ENCODE measurements at regions of chr11 and their contacts with region 1.

Region 1: GRCh38 chr11:128290106-128290840 is 297.1 kb downstream of the ETS1 start:
- DNase-seq: peak; percentile 84 to 89 (median 86)
- H3K4me3 ChIP-seq: peak overlapping the region; percentile 68
- H3K4me3 Mint-ChIP-seq: peak overlapping the region; percentile 87 to 95 (median 94)
- H3K27ac ChIP-seq: peak overlapping the region; percentile 90
- H3K27ac Mint-ChIP-seq: peak overlapping the region; percentile 98 to 100 (median 99)
- H3K4me1 ChIP-seq: peaks cover 89% of the 10 kb centered on the region
- H3K4me1 Mint-ChIP-seq: peaks cover 70 to 100% (median 84%) of the 10 kb centered on the region in 4 donors
- H3K27me3 ChIP-seq: no peaks in the 10 kb centered on the region
- H3K27me3 Mint-ChIP-seq: no peaks in the 10 kb centered on the region

Region 2: DNA sequence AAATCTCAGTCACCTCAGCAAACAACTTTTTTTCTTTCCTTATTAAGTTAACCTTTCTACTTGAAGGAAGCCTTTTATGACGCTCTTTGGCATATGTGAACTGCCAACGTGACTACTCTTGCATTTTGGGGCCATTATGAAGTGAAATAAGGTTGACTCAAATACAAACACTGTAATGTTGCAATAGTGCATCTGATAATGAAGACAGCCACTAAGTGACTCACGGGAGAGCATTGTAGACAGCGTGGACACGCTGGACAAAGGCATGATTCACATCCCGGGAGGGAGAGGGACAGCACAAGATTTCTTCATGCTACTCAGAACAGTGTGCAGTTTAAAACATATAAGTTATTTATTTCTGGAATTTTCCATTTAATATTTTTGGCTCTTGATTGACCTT is 263.7 kb before region 1 on chr11:
- CTCF ChIA-PET with region 1: interaction called, 5 read pairs
- POLR2A ChIA-PET with region 1: no interaction called
- intact Hi-C with region 1: loop called (anchors 1 kb)
- DNase-seq: no peak
- H3K4me3 ChIP-seq: no peak overlapping the region
- H3K4me3 Mint-ChIP-seq: no peak overlapping the region
- H3K27ac ChIP-seq: no peak overlapping the region
- H3K27ac Mint-ChIP-seq: no peak overlapping the region
- H3K4me1 ChIP-seq: no peaks in the 10 kb centered on the region
- H3K4me1 Mint-ChIP-seq: peaks cover 0 to 4% (median 1%) of the 10 kb centered on the region in 4 donors
- H3K27me3 ChIP-seq: no peaks in the 10 kb centered on the region
- H3K27me3 Mint-ChIP-seq: peaks cover 3 to 4% of the 10 kb centered on the region in 2 donors

Region 3: GRCh38 chr11:128222245-128222884 is 67.9 kb before region 1 on chr11:
- CTCF ChIA-PET with region 1: no interaction called
- POLR2A ChIA-PET with region 1: no interaction called
- intact Hi-C with region 1: no loop called
- DNase-seq: no peak
- H3K4me3 ChIP-seq: no peak overlapping the region
- H3K4me3 Mint-ChIP-seq: no peak overlapping the region
- H3K27ac ChIP-seq: no peak overlapping the region
- H3K27ac Mint-ChIP-seq: no peak overlapping the region
- H3K4me1 ChIP-seq: no peaks in the 10 kb centered on the region
- H3K4me1 Mint-ChIP-seq: peaks cover 4 to 8% (median 6%) of the 10 kb centered on the region in 4 donors
- H3K27me3 ChIP-seq: no peaks in the 10 kb centered on the region
- H3K27me3 Mint-ChIP-seq: peaks cover 2% of the 10 kb centered on the region in 2 donors

Region 4: DNA sequence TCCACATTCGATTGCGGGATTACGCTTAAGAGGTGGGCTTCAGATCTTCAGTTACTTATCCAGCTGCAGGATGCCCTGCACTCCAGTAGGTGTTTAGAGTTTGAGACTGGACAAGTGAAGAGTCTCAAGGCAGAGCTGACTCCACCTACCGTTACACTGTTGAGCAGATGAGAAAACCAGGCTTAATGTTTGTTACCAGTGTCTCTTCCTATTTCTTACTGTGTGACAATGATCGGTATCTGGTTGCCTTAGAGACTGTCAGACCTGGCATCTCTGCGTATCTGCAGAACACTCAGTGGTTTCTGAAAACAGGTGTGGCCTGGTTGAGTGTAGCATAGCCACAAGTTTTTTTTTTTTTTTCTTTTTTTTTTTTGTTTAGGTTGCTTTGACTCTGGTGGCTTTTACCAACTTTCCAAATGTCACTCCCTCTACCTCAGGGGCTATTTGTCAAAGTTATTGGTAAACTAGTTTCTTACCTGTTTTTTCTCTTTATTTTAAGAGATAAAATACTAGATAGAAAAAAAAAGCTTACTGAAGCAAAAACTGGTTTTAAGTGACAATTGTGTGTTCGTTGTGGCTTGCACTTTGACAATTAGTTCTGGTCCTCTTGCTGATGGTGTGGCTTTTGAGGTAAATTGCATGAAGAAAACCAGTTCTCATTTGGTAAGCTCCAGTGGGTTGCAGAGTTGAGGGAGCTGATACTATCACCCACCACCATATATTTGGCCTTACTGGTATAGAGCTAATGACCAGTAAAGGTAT is 12.3 kb after region 1 on chr11:
- CTCF ChIA-PET with region 1: interaction called, 73 read pairs
- POLR2A ChIA-PET with region 1: interaction called, 223 read pairs
- intact Hi-C with region 1: loop called (anchors 1 kb)
- DNase-seq: peak; percentile 88 to 96 (median 94)
- H3K4me3 ChIP-seq: peak overlapping the region; percentile 54 to 77
- H3K4me3 Mint-ChIP-seq: peak overlapping the region; percentile 90 to 95 (median 92)
- H3K27ac ChIP-seq: peak overlapping the region; percentile 93
- H3K27ac Mint-ChIP-seq: peak overlapping the region; percentile 95 to 100 (median 98)
- H3K4me1 ChIP-seq: peaks cover 98% of the 10 kb centered on the region
- H3K4me1 Mint-ChIP-seq: peaks cover 72 to 97% (median 86%) of the 10 kb centered on the region in 4 donors
- H3K27me3 ChIP-seq: no peaks in the 10 kb centered on the region
- H3K27me3 Mint-ChIP-seq: no peaks in the 10 kb centered on the region

Region 5: GRCh38 chr11:128365044-128365443 is 74.8 kb after region 1 on chr11:
- CTCF ChIA-PET with region 1: no interaction called
- POLR2A ChIA-PET with region 1: interaction called, 6 read pairs
- intact Hi-C with region 1: loop called (anchors 5 kb)
- DNase-seq: peak in 1 of 5 donors; percentile 35
- H3K4me3 ChIP-seq: no peak overlapping the region
- H3K4me3 Mint-ChIP-seq: no peak overlapping the region
- H3K27ac ChIP-seq: no peak overlapping the region
- H3K27ac Mint-ChIP-seq: peak overlapping the region in 1 of 7 donors; percentile 12
- H3K4me1 ChIP-seq: peaks cover 19% of the 10 kb centered on the region
- H3K4me1 Mint-ChIP-seq: peaks cover 21 to 45% (median 29%) of the 10 kb centered on the region in 4 donors
- H3K27me3 ChIP-seq: no peaks in the 10 kb centered on the region
- H3K27me3 Mint-ChIP-seq: no peaks in the 10 kb centered on the region

Region 6: GRCh38 chr11:128472128-128473089 is 182.1 kb after region 1 on chr11:
- CTCF ChIA-PET with region 1: interaction called, 8 read pairs
- POLR2A ChIA-PET with region 1: interaction called, 651 read pairs
- intact Hi-C with region 1: loop called (anchors 1 kb)
- DNase-seq: peak in 4 of 5 donors; percentile 51 to 82 (median 57)
- H3K4me3 ChIP-seq: peak overlapping the region; percentile 5 to 27
- H3K4me3 Mint-ChIP-seq: peak overlapping the region; percentile 70 to 93 (median 84)
- H3K27ac ChIP-seq: peak overlapping the region; percentile 94
- H3K27ac Mint-ChIP-seq: peak overlapping the region; percentile 98 to 99 (median 99)
- H3K4me1 ChIP-seq: peaks cover 100% of the 10 kb centered on the region
- H3K4me1 Mint-ChIP-seq: peaks cover 85 to 98% (median 92%) of the 10 kb centered on the region in 4 donors
- H3K27me3 ChIP-seq: no peaks in the 10 kb centered on the region
- H3K27me3 Mint-ChIP-seq: no peaks in the 10 kb centered on the region

Region 7: DNA sequence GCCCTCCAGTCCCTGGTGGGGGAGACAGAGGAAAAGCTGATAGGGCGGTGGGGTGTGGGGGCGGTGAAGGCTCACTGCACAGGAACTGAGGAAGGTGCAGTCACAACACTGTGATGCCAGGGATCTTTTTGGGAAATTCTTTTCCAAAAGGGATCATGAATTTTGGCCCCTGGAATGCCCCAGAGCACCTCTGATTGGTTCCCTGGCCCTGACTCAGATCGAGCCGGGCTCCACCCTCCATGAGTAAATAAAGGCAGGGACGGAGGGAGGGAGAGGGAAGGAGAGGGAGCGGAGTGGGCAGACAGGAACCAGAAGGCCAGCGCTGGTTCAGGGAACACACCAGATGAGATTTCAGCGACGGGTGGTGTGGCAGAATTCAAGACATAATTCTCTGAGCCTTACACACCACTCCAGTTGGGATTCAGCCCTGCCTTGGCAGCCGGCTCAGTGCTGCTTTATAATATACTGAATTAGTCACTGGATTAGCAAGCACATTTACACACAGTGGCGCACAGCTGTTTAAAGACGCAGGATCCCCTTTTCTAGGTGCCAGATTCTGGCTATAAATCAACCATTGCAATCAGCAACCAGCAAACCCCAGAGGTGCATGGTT is 216.8 kb after region 1 on chr11:
- CTCF ChIA-PET with region 1: interaction called, 17 read pairs
- POLR2A ChIA-PET with region 1: interaction called, 888 read pairs
- intact Hi-C with region 1: loop called (anchors 2 kb)
- DNase-seq: peak in 1 of 5 donors; percentile 77
- H3K4me3 ChIP-seq: peak overlapping the region; percentile 37 to 39
- H3K4me3 Mint-ChIP-seq: peak overlapping the region; percentile 81 to 100 (median 94)
- H3K27ac ChIP-seq: peak overlapping the region; percentile 89
- H3K27ac Mint-ChIP-seq: peak overlapping the region; percentile 92 to 99 (median 98)
- H3K4me1 ChIP-seq: peaks cover 100% of the 10 kb centered on the region
- H3K4me1 Mint-ChIP-seq: peaks cover 80 to 100% (median 89%) of the 10 kb centered on the region in 4 donors
- H3K27me3 ChIP-seq: no peaks in the 10 kb centered on the region
- H3K27me3 Mint-ChIP-seq: no peaks in the 10 kb centered on the region

Region 8: DNA sequence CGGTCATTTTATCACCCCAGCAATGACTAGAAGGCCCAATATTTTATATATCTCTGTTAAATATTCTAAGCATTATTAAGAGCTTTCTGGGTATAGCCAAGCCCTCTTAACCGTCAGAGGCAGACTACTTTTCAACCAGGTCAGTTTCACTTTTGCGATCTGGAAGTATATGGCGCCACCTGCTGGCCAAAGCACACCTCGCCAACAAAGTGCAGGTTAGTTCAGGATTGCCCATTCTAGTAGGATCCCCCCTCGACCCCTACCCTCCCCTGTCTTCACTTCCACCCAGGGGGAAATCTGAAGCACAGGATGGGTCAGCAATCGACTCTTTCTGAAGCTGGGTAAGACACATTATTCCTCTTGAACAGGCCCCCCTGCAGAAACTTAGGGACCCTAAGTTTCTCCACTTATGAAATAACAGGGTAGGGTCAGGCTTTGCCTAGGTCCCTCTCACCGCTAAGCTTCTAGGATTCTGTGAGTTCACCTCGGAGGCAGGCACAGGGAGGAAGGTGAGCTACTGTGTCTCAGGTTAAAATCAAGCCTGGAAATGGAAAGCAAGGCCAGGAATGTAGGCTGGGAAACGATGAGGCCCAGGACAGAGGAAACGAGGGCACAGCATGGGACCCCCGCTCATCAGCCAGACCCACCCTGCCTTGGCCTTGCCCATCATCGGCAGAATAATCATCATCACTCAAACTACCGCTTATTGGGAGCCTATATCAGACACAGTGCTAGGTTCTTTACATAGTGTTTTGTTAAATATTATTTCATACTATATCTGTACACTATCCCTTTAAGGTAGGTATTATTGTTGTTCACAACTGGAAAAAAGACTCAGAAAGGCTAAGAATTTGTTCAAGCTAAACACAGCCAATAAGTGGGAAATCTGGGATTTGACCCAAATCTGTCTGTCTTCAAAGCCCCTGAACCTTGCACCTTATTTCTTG is 541.2 kb after region 1 on chr11:
- CTCF ChIA-PET with region 1: interaction called, 13 read pairs
- POLR2A ChIA-PET with region 1: interaction called, 9 read pairs
- intact Hi-C with region 1: loop called (anchors 2 kb)
- DNase-seq: peak; percentile 79 to 85 (median 83)
- H3K4me3 ChIP-seq: peak overlapping the region in 1 of 2 donors; percentile 12
- H3K4me3 Mint-ChIP-seq: peak overlapping the region; percentile 46 to 91 (median 82)
- H3K27ac ChIP-seq: peak overlapping the region; percentile 76
- H3K27ac Mint-ChIP-seq: peak overlapping the region; percentile 86 to 98 (median 97)
- H3K4me1 ChIP-seq: peaks cover 24% of the 10 kb centered on the region
- H3K4me1 Mint-ChIP-seq: peaks cover 21 to 49% (median 36%) of the 10 kb centered on the region in 4 donors
- H3K27me3 ChIP-seq: no peaks in the 10 kb centered on the region
- H3K27me3 Mint-ChIP-seq: no peaks in the 10 kb centered on the region

Measured in CD4-positive, alpha-beta memory T cell (primary cell).